Lower leg skin (tissue), 4 donors: ENCODE measurements at regions of chr4 and their contacts with region 1.

Region 1: DNA sequence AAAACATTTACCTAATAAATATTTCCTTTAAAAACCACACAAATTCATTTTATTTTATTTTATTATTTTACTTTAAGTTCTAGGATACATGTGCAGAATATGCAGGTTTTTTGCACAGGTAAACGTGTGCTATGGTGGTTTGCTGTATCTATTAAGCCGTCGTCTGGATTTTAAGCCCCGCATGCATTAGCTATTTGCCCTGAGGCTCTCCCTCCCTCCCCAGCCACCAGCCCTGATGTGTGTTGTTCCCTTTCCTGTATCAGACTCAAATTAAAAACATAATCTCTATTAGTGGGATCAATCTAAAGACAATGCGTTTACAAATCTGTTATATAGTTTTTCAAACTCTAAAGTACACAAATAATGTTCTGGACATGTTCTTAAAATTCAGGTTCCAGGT is 1.2 kb upstream of the HTN3 start:
- DNase-seq: no peak
- H3K4me3 ChIP-seq: no peak overlapping the region
- CTCF ChIP-seq: no peak
- POLR2A ChIP-seq: no peak

Region 2: DNA sequence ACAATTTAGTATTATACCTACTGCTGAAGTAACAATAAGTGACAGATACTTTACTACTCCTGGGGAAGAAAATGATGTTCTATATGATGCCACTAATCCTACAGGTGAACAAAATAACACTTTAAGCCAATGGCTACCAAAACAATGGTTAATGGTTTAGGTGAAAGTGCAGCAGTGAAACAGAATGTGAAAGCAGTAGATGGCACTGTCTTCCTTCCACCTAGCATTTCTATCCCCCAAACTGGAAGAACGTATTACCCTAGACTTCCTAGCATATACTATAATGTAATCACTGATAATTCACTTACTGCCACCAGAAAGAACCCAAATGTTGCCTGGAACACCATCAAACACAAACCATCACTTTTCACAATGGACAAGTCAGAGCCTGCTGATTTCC is 288.9 kb after region 1 on chr4:
- intact Hi-C with region 1: loop called (anchors 5 kb)
- DNase-seq: no peak
- H3K4me3 ChIP-seq: no peak overlapping the region
- CTCF ChIP-seq: no peak
- POLR2A ChIP-seq: no peak